ENCODE measurements at regions of chr19 and their contacts with region 1.

Region 1: DNA sequence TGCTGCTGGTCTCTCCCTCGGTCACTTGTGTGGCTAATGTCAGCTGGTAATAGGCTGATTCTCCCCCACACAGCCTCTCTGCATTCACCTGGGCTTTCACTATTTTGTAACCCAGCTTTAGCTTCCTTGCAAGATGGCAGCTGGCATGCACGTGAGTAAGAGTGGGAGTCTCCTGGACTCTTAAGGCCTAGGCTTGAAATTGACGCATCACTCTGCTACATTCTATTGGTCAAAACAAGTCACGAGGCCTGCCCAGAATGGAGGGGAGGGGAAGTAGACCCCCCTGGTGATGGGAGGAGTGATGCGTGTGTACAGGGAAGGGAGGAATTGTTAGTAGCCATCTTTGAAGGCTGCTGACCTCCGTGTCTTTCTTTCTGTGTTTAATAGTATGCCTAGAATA is 24.9 kb upstream of the PNMA8B start:
- DNase-seq: no peak
- ATAC-seq: no peak
- H3K4me3 ChIP-seq: no peak overlapping the region
- H3K4me3 Mint-ChIP-seq: peak overlapping the region in 5 of 10 donors; percentile 29 to 66 (median 59)
- H3K27ac ChIP-seq: peak overlapping the region; percentile 54
- H3K27ac Mint-ChIP-seq: peak overlapping the region in 8 of 9 donors; percentile 21 to 98 (median 79)
- H3K4me1 ChIP-seq: peaks cover 9 to 60% of the 10 kb centered on the region in 2 donors
- H3K4me1 Mint-ChIP-seq: peaks cover 21 to 93% (median 82%) of the 10 kb centered on the region in 7 donors
- H3K27me3 ChIP-seq: no peaks in the 10 kb centered on the region
- H3K27me3 Mint-ChIP-seq: peaks cover 0 to 3% (median 0%) of the 10 kb centered on the region in 5 donors

Region 2: DNA sequence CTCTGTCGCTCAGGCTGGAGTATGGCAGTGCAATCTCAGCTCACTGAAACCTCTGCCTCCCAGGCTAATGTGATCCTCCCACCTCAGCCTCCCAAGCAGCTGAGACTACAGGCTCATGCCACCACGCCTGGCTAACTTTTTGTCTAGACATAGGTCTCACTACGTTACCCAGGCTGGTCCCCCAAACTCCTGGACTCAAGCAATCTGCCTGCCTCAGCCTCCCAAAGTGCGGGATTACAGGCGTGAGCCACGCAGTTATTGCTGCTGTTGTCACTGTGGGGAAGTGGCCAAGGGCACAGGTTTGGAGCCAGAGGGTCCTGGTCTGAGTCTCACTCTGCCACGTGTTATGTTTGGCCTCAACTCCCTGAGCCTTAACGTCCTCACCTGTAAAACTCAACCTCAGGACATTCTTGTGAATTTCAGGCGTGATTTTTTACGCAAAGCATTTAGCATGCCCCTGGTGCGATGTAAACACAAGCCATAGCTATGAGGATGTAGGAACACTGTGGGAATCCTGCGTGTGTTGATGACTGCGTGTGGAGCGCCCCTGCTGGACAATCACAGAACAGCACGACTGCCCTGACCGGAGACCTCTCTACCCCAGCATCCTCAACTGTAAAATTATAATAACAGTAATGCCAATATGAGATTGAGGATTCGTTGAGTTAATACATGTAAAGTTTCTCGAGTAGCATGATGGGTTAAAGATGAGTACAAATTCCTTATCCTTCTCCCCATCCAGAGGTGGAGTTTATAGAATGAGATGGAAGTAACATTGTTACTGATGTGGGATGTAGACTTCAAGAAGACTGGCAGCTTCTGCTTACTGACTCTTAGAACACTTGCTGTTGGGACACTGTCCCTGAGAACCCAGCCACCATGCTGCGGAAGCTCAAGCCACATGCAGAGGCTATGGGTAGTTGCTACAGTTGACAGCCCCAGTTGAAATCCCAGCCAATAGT is 16.8 kb after region 1 on chr19:
- CTCF ChIA-PET with region 1: interaction called, 241 read pairs
- POLR2A ChIA-PET with region 1: interaction called, 20 read pairs
- intact Hi-C with region 1: loop called (anchors 1 kb)
- DNase-seq: peak; percentile 27 to 64 (median 48)
- ATAC-seq: peak; percentile 82
- H3K4me3 ChIP-seq: no peak overlapping the region
- H3K4me3 Mint-ChIP-seq: no peak overlapping the region
- H3K27ac ChIP-seq: no peak overlapping the region
- H3K27ac Mint-ChIP-seq: no peak overlapping the region
- H3K4me1 ChIP-seq: no peaks in the 10 kb centered on the region
- H3K4me1 Mint-ChIP-seq: peaks cover 0 to 8% (median 6%) of the 10 kb centered on the region in 7 donors
- H3K27me3 ChIP-seq: no peaks in the 10 kb centered on the region
- H3K27me3 Mint-ChIP-seq: peaks cover 0 to 14% (median 0%) of the 10 kb centered on the region in 5 donors